Psoas muscle (tissue), 8 donors: ENCODE measurements at regions of chr1 and their contacts with region 1.

Region 1: GRCh38 chr1:88302843-88303486 is 381.1 kb upstream of the PKN2 start:
- DNase-seq: no peak
- ATAC-seq: no peak
- H3K4me3 ChIP-seq: no peak overlapping the region
- H3K27ac ChIP-seq: no peak overlapping the region
- H3K4me1 ChIP-seq: no peaks in the 10 kb centered on the region
- H3K27me3 ChIP-seq: no peaks in the 10 kb centered on the region
- CTCF ChIP-seq: no peak

Region 2: GRCh38 chr1:88180449-88181108 is 122.4 kb before region 1 on chr1:
- intact Hi-C with region 1: loop called in 1 of 2 experiments (anchors 5 kb)
- DNase-seq: peak; percentile 35 to 59
- ATAC-seq: peak; percentile 53 to 73 (median 66)
- H3K4me3 ChIP-seq: no peak overlapping the region
- H3K27ac ChIP-seq: no peak overlapping the region
- H3K4me1 ChIP-seq: no peaks in the 10 kb centered on the region
- H3K27me3 ChIP-seq: no peaks in the 10 kb centered on the region
- CTCF ChIP-seq: peak; percentile 62

Region 3: GRCh38 chr1:88350648-88351047 is 47.7 kb after region 1 on chr1:
- intact Hi-C with region 1: no loop called
- DNase-seq: no peak
- ATAC-seq: no peak
- H3K4me3 ChIP-seq: no peak overlapping the region
- H3K27ac ChIP-seq: no peak overlapping the region
- H3K4me1 ChIP-seq: no peaks in the 10 kb centered on the region
- H3K27me3 ChIP-seq: no peaks in the 10 kb centered on the region
- CTCF ChIP-seq: no peak

Region 4: DNA sequence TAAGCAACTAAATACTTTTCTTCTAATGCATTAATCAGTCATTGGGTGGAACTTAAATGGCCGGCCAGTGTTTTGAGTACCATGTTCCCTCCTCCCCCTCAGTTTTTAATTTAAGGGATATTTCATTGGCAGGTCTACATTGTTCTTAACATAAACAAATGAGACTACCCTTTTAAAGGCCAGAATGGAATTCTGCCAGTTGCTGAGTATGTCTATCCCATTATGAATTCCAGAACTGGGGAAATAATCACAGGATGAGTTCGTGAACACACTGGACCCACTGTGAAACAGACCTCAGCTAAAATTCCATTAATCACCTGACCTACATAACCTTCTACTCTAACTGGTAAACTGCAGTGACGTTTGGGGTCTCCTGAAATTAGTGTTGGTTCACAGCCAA is 75.6 kb after region 1 on chr1:
- intact Hi-C with region 1: no loop called
- DNase-seq: no peak
- ATAC-seq: no peak
- H3K4me3 ChIP-seq: no peak overlapping the region
- H3K27ac ChIP-seq: no peak overlapping the region
- H3K4me1 ChIP-seq: no peaks in the 10 kb centered on the region
- H3K27me3 ChIP-seq: no peaks in the 10 kb centered on the region
- CTCF ChIP-seq: no peak